ENCODE measurements at regions of chr17 and their contacts with region 1.

Region 1: GRCh38 chr17:48307814-48308411 is 122.1 kb downstream of the SKAP1 start:
- DNase-seq: peak; percentile 48
- H3K4me3 ChIP-seq: no peak overlapping the region; a peak in 1 of 4 replicates
- H3K27ac ChIP-seq: no peak overlapping the region
- H3K4me1 ChIP-seq: no peaks in the 10 kb centered on the region; a peak in 1 of 4 replicates
- H3K27me3 ChIP-seq: peaks cover 52% of the 10 kb centered on the region
- CTCF ChIP-seq: peak; percentile 97
- EP300 ChIP-seq: no peak
- RAD21 ChIP-seq: peak; percentile 67

Region 2: DNA sequence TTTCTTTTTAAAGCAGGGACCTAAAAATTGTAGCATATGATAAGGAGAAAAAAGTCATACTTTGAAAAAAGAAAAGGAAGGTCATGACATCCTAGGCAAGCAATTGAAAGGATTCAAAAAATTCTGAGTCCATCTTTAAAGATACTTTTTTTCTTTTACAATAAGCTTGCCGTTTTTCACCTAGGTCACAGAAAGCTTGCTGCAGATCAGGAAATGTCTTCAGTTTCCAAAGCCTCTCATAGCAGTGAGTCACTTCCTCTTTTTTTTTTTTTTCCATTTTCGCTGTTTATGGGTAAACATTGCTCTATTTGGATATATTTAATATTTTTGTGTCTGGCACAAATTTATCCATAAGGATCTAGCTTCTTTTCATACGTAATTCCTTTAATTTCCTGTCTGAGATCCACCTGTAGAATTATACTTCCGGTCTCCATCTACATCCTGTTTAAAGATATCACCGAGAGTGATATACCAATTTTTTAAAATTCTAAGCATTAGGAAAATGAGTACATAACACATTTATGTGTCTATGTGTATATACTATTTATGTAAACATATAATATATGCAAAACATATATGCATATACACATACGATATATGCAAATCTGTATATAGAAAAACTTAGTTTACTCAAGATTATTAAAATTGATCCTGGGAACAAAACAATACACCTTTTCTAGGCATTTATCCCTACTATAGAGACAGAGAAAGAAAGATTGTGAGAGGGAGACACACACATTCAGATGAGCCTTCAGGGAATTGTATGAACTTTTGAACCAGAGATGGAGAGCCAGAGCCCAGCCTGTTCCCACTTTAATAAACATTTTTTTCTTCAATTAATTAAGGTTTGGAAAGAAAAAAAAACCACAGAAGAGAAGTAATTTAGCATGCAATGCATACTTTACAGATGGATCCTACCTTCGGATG is 12.3 kb before region 1 on chr17:
- CTCF ChIA-PET with region 1: interaction called, 40 read pairs
- POLR2A ChIA-PET with region 1: no interaction called
- DNase-seq: no peak
- H3K4me3 ChIP-seq: no peak overlapping the region
- H3K27ac ChIP-seq: no peak overlapping the region
- H3K4me1 ChIP-seq: no peaks in the 10 kb centered on the region; a peak in 1 of 4 replicates
- H3K27me3 ChIP-seq: peaks cover 57% of the 10 kb centered on the region
- CTCF ChIP-seq: no peak
- EP300 ChIP-seq: no peak
- RAD21 ChIP-seq: no peak

Region 3: DNA sequence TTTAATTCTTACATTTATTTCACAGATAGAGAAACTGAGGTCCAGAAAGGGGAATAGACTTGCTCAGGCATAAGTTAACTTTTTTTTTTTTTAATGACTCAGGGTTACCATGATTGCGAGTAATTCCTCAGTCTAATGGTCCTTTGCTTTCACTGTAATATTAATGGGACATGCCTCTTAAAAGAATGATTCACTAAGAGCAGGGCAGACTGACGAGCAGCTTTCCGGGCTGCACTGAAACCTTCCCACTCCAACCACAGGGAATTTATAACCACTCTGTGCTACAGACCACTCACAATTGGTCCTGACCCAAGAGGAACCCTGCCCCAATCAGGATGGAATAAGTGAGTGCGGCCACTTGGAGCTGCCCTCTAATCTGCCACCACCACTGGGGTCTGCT is 231.3 kb after region 1 on chr17:
- CTCF ChIA-PET with region 1: no interaction called
- POLR2A ChIA-PET with region 1: no interaction called
- DNase-seq: no peak
- H3K4me3 ChIP-seq: no peak overlapping the region
- H3K27ac ChIP-seq: no peak overlapping the region
- H3K4me1 ChIP-seq: no peaks in the 10 kb centered on the region
- H3K27me3 ChIP-seq: peaks cover 96% of the 10 kb centered on the region
- CTCF ChIP-seq: no peak
- EP300 ChIP-seq: no peak
- RAD21 ChIP-seq: no peak